K562 (cell line): ENCODE measurements at regions of chr7 and their contacts with region 1.

Region 1: GRCh38 chr7:48088559-48089045 is 463 bp upstream of the UPP1 start:
- DNase-seq: peak; percentile 61 to 80 (median 68)
- ATAC-seq: peak; percentile 76
- H3K4me3 ChIP-seq: peak overlapping the region; percentile 49
- H3K27ac ChIP-seq: peak overlapping the region; percentile 82
- H3K4me1 ChIP-seq: peaks cover 7 to 27% of the 10 kb centered on the region in 2 experiments; a peak in 4 of 5 replicates
- H3K27me3 ChIP-seq: peaks cover 10 to 26% of the 10 kb centered on the region in 2 experiments; a peak in 4 of 5 replicates
- CTCF ChIP-seq: no peak
- EP300 ChIP-seq: no peak; the same call in 1 of the 2 replicates
- POLR2A ChIP-seq: peak; percentile 74
- RAD21 ChIP-seq: no peak

Region 2: GRCh38 chr7:47979145-47979831 is 109.3 kb before region 1 on chr7 and contains the start of gene HUS1:
- CTCF ChIA-PET with region 1: no interaction called
- POLR2A ChIA-PET with region 1: interaction called, 4 read pairs
- in situ Hi-C with region 1: no loop called
- intact Hi-C with region 1: loop called (anchors 2 kb)
- DNase-seq: peak; percentile 94 to 95 (median 95)
- ATAC-seq: peak; percentile 99
- H3K4me3 ChIP-seq: peak within 1 kb of the TSS; percentile 53
- H3K27ac ChIP-seq: peak within 1 kb of the TSS; percentile 82
- H3K4me1 ChIP-seq: peaks cover 5 to 6% of the 10 kb centered on the region in 2 experiments; a peak in 4 of 5 replicates
- H3K27me3 ChIP-seq: no peaks in the 10 kb centered on the region
- CTCF ChIP-seq: no peak
- EP300 ChIP-seq: 0 out of 2 replicates have a peak, but pooled peaks have one; percentile 43
- POLR2A ChIP-seq: peak; percentile 95
- RAD21 ChIP-seq: no peak
- polyA plus RNA-seq, gene HUS1: 25.2 to 27.0 TPM